Panc1 (cell line): ENCODE measurements at regions of chr4 and their contacts with region 1.

Region 1: GRCh38 chr4:930028-930551 is 2.0 kb downstream of the GAK start:
- DNase-seq: no peak
- ATAC-seq: no peak
- H3K4me3 ChIP-seq: peak overlapping the region; percentile 90 to 97; a peak in 3 of 4 replicates
- H3K27ac ChIP-seq: 0 out of 2 replicates have a peak overlapping the region, but pooled peaks have one; percentile 17
- H3K4me1 ChIP-seq: peaks cover 21% of the 10 kb centered on the region
- H3K27me3 ChIP-seq: no peaks in the 10 kb centered on the region
- CTCF ChIP-seq: no peak

Region 2: GRCh38 chr4:896216-896615 is 33.9 kb before region 1 on chr4:
- CTCF ChIA-PET with region 1: no interaction called
- POLR2A ChIA-PET with region 1: no interaction called
- in situ Hi-C with region 1: no loop called
- intact Hi-C with region 1: no loop called
- DNase-seq: no peak
- ATAC-seq: no peak
- H3K4me3 ChIP-seq: no peak overlapping the region
- H3K27ac ChIP-seq: no peak overlapping the region
- H3K4me1 ChIP-seq: no peaks in the 10 kb centered on the region
- H3K27me3 ChIP-seq: no peaks in the 10 kb centered on the region
- CTCF ChIP-seq: no peak

Region 3: DNA sequence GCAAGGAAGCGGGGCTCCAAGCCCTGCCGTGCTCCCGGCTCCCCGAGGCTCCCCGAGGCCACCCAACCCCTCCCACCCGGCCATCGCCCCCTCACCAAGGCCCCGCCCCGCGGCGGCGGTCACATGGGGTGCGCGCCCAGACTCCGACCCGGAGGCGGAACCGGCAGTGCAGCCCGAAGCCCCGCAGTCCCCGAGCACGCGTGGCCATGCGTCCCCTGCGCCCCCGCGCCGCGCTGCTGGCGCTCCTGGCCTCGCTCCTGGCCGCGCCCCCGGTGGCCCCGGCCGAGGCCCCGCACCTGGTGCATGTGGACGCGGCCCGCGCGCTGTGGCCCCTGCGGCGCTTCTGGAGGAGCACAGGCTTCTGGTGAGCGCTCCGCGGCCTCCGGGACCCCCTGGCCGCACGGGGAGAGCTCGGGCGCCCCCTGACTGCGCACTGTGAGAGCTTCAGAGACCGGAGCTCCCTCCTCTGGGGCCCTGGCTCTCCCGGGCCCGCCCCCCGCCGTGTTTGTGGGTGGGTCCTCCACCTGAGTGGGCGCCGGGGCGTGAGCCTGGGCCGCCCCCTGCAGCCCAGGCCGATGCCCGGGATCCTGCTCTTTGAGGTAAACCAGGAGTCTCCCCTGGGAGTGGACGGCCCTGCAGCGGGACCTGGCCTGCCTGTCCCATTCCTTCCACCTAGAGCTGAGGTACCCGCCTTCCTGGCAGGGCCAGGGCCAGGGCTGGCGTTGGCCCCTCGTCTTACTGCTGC is 57.0 kb after region 1 on chr4 and contains the start of gene IDUA:
- CTCF ChIA-PET with region 1: no interaction called
- POLR2A ChIA-PET with region 1: interaction called, 10 read pairs
- in situ Hi-C with region 1: no loop called
- intact Hi-C with region 1: no loop called
- DNase-seq: no peak
- ATAC-seq: peak; percentile 83
- H3K4me3 ChIP-seq: peak within 1 kb of the TSS; percentile 61 to 67
- H3K27ac ChIP-seq: peak within 1 kb of the TSS; percentile 72
- H3K4me1 ChIP-seq: peaks cover 5% of the 10 kb centered on the region
- H3K27me3 ChIP-seq: no peaks in the 10 kb centered on the region
- CTCF ChIP-seq: peak; percentile 82
- total RNA-seq, gene IDUA: 30.6 TPM